ENCODE measurements at regions of chr22 and their contacts with region 1.

Region 1: GRCh38 chr22:38069372-38070249 is 12.4 kb downstream of the PICK1 start:
- DNase-seq: peak; percentile 58
- ATAC-seq: peak; percentile 66
- H3K4me3 Mint-ChIP-seq: no peak overlapping the region
- H3K27ac Mint-ChIP-seq: peak overlapping the region; percentile 45; the same call in 1 of the 2 replicates
- H3K4me1 Mint-ChIP-seq: peaks cover 2% of the 10 kb centered on the region; the same call in 1 of the 2 replicates
- H3K27me3 Mint-ChIP-seq: no peaks in the 10 kb centered on the region
- CTCF ChIP-seq: peak; percentile 25; the same call in 1 of the 2 replicates

Region 2: DNA sequence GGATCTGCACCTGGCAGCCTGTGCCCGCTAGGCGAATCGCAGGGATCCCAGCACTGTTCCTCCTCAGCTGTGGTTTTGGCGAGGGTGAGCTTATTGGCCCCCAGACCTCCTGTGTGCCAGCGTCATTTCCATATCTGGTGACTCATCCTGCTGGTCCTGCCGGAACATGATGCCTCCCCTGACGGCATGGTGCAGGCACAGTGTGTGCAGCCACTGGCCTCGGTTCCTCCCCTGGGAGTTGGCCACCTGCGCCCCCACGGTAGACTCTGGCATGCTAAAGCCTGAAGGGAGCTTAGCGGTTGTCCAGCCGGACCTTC is 69.7 kb before region 1 on chr22:
- CTCF ChIA-PET with region 1: no interaction called
- POLR2A ChIA-PET with region 1: no interaction called
- DNase-seq: no peak
- ATAC-seq: peak; percentile 45
- H3K4me3 Mint-ChIP-seq: no peak overlapping the region
- H3K27ac Mint-ChIP-seq: 0 out of 2 replicates have a peak overlapping the region, but pooled peaks have one; percentile 7
- H3K4me1 Mint-ChIP-seq: peaks cover 27% of the 10 kb centered on the region
- H3K27me3 Mint-ChIP-seq: peaks cover 2% of the 10 kb centered on the region; the same call in 1 of the 2 replicates
- CTCF ChIP-seq: no peak

Region 3: DNA sequence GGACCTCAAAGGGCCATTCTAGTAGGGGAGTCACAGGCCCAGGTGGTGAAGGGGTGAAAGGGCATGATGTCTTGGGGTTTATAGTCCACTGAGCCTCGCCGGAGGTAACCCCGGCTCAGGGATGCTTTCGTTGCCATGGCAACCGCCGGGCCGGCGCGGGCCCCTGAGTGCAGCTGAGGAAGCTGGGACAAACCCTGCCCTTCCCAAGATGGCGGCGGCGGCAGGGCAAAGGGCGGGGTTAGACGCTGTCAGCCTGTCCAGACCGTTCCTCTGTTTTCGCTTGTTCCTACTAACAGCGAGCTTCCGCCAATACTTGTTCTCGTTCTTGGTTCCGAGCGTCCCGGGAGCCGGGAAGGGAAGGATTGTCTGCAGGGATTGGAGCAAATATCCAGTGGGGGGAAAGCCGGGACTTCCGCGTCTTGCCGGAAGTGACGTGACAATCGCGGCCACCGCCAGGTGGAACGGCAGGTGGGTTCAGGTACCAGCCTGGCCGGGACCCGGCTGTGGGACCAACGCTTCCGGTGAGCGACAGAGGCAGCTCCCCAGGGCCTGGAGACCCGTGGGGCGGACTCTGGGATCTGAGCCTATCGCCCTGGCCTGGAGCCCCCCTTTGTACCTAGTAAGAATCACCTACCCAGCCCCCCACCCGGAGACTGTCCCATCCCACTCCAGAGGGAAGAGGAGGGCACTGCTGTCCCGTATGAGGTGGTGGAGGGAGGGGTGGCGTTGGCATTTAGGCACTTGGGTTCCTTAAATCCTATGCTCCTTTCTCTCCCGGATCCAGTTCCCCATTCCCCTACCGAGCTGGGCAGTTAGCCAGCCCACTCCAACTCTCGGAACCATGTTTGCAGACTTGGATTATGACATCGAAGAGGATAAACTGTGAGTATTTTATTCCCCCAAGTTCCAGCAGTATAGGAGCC is 12.4 kb before region 1 on chr22 and contains the start of gene PICK1:
- CTCF ChIA-PET with region 1: interaction called, 42 read pairs
- POLR2A ChIA-PET with region 1: interaction called, 4 read pairs
- DNase-seq: peak; percentile 95
- ATAC-seq: peak; percentile 78
- H3K4me3 Mint-ChIP-seq: peak within 1 kb of the TSS; percentile 94
- H3K27ac Mint-ChIP-seq: peak within 1 kb of the TSS; percentile 100
- H3K4me1 Mint-ChIP-seq: peaks cover 10% of the 10 kb centered on the region
- H3K27me3 Mint-ChIP-seq: no peaks in the 10 kb centered on the region; the same call in 1 of the 2 replicates
- CTCF ChIP-seq: no peak
- total RNA-seq, gene PICK1: 28.1 to 33.4 TPM (median 28.2 TPM) in 3 replicates

Region 4: DNA sequence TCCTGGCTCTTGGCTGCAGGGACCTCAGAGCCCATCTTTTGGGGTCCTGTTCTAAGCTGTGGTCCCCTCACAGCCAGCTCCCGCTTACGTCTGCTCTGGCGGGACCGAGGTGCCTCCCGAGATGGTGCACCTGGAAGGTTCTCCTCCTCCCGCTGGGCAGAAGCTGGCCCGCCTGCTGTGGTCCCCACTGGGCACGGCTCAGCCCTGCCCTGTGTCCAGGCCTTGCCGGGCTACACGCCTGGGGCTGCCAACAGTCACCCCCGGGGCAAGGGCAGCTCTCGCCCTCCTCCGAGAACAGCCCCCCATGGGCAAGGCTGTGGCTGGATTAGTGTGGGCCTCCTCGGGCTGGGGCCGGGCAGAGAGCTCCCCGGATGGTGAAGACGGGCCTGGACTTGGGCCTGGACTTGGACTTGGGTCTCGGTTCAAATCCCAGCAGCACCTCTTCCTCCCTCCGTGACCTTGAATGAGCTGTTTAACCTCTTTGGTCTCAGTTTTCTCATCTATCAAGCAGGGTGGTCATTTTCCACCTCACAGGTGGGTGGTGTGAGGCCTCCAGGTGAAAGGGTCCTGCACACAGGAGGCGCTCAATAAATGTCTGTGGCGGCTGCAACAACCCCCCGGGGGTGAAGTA is 39.9 kb after region 1 on chr22:
- CTCF ChIA-PET with region 1: interaction called, 12 read pairs
- POLR2A ChIA-PET with region 1: interaction called, 4 read pairs
- DNase-seq: no peak
- ATAC-seq: no peak
- H3K4me3 Mint-ChIP-seq: no peak overlapping the region
- H3K27ac Mint-ChIP-seq: no peak overlapping the region
- H3K4me1 Mint-ChIP-seq: peaks cover 6% of the 10 kb centered on the region
- H3K27me3 Mint-ChIP-seq: no peaks in the 10 kb centered on the region; the same call in 1 of the 2 replicates
- CTCF ChIP-seq: no peak

Measured in WTC11 (cell line).